MCF 10A (cell line): ENCODE measurements at regions of chr4 and their contacts with region 1.

Region 1: DNA sequence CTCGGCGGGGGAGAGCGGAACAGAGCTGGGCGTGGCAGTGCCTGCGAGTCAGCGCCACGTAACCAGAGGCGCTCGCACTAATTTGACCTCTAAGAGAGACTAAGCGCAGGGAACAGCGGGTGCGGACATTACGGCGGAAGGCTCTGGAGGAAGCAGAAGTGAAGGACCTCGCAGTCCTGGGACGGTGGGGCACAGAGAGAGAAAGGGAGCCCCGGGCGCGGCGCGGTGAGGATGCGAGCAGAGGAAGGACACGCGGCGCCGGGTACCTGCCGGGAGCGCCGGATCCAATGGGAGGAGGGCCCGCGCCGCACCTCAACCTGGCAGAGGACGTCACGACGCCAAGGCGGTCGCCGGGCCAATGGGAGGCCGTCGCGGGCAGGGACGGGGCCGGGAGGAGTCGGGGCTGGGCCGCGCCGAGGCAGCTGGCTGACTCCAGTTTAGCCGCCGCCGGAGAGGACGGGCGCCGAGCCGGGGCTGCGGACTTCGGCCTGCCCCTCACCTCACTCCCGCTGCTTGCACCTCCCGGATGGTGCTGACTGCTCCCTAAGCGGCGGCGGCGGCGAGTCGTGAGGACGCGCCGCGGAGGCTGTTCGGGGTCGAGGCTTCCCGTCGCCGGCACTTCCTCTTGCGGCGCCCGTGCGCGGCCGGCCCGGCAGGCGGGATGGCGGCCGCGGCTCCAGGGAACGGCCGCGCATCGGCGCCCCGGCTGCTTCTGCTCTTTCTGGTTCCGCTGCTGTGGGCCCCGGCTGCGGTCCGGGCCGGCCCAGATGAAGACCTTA is at the start of gene TMEM165:
- DNase-seq: peak; percentile 93
- H3K4me3 Mint-ChIP-seq: peak within 1 kb of the TSS; percentile 93
- H3K27ac Mint-ChIP-seq: peak within 1 kb of the TSS; percentile 98
- H3K4me1 Mint-ChIP-seq: peaks cover 22% of the 10 kb centered on the region
- H3K27me3 Mint-ChIP-seq: no peaks in the 10 kb centered on the region
- CTCF ChIP-seq: no peak
- total RNA-seq, gene TMEM165: 110 and 119 TPM in 2 replicates

Region 2: DNA sequence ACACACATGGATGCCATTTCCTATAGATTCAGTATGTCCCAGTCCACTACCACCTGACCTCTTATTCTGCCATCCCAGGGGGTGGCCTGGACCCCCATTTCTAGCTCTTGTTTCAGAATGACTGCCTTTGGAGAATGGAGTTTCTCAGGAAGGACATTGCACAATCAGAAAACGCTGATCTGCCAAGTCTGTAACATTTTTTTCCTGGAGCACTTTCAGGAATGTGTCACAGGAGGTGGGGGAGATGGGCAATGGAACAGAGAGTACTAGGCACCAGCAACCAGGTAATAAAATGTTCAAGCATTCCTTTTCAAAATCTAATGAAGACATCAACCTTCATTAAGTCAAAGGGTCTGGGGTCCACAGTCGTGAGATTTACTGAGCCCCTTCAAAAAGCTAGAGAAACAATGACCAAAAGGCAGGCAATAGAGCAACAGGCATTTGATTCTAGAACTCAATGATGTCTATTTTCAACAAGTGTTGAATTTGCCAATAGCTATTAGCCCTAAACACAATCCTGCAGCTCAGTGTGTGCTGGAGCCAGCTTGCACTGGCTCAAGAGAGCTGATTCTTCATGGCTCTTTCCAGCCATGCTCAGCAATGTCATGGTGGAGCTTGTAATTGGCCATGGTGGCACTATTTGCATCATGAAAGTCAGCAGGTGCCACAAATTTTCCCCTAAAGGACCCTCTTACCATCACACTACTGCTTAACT is 357.4 kb before region 1 on chr4:
- CTCF ChIA-PET with region 1: no interaction called
- POLR2A ChIA-PET with region 1: interaction called, 18 read pairs
- intact Hi-C with region 1: no loop called
- DNase-seq: peak; percentile 77
- H3K4me3 Mint-ChIP-seq: peak overlapping the region; percentile 59
- H3K27ac Mint-ChIP-seq: peak overlapping the region; percentile 73
- H3K4me1 Mint-ChIP-seq: peaks cover 59% of the 10 kb centered on the region
- H3K27me3 Mint-ChIP-seq: no peaks in the 10 kb centered on the region
- CTCF ChIP-seq: no peak

Region 3: GRCh38 chr4:55258152-55258865 is 137.4 kb before region 1 on chr4:
- CTCF ChIA-PET with region 1: no interaction called
- POLR2A ChIA-PET with region 1: no interaction called
- intact Hi-C with region 1: no loop called
- DNase-seq: no peak
- H3K4me3 Mint-ChIP-seq: no peak overlapping the region
- H3K27ac Mint-ChIP-seq: no peak overlapping the region
- H3K4me1 Mint-ChIP-seq: no peaks in the 10 kb centered on the region
- H3K27me3 Mint-ChIP-seq: no peaks in the 10 kb centered on the region
- CTCF ChIP-seq: no peak

Region 4: GRCh38 chr4:55358668-55359067 is 37.0 kb before region 1 on chr4:
- CTCF ChIA-PET with region 1: interaction called, 6 read pairs
- POLR2A ChIA-PET with region 1: interaction called, 387 read pairs
- intact Hi-C with region 1: loop called (anchors 2 kb)
- DNase-seq: peak; percentile 94
- H3K4me3 Mint-ChIP-seq: no peak overlapping the region
- H3K27ac Mint-ChIP-seq: peak overlapping the region; percentile 76
- H3K4me1 Mint-ChIP-seq: peaks cover 35% of the 10 kb centered on the region
- H3K27me3 Mint-ChIP-seq: no peaks in the 10 kb centered on the region
- CTCF ChIP-seq: no peak

Region 5: DNA sequence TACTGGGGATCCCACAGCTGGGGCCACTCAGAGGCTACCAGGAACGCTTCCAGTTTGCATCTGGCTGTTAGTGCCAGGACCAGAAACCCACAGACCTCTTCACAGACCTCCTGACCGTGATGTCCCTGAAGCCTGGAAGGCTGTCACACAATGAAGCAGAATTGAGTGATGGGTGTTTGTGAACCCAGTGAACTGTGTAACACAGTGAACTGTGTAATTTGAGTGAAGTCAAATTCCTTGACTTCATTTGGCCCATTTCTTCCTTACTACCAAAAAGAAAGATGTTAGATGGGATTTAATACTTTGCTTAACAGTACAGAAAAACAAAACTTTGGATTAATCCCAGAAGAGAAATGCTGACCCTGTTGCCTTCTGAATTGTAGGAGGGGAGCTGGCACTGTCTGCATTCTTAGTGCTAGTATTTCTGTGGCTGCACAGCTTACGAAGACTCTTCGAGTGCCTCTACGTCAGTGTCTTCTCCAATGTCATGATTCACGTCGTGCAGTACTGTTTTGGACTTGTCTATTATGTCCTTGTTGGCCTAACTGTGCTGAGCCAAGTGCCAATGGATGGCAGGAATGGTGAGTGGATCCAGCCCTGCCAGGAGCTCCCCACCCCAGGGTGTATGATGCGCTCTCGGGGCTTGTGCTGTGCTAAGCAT is 31.9 kb before region 1 on chr4:
- CTCF ChIA-PET with region 1: interaction called, 6 read pairs
- POLR2A ChIA-PET with region 1: interaction called, 387 read pairs
- intact Hi-C with region 1: loop called (anchors 2 kb)
- DNase-seq: no peak
- H3K4me3 Mint-ChIP-seq: no peak overlapping the region
- H3K27ac Mint-ChIP-seq: no peak overlapping the region
- H3K4me1 Mint-ChIP-seq: peaks cover 8% of the 10 kb centered on the region
- H3K27me3 Mint-ChIP-seq: no peaks in the 10 kb centered on the region
- CTCF ChIP-seq: no peak

Region 6: GRCh38 chr4:55378617-55379463 is 16.9 kb before region 1 on chr4:
- CTCF ChIA-PET with region 1: interaction called, 3 read pairs
- POLR2A ChIA-PET with region 1: interaction called, 66 read pairs
- intact Hi-C with region 1: loop called (anchors 2 kb)
- DNase-seq: peak; percentile 85
- H3K4me3 Mint-ChIP-seq: peak overlapping the region; percentile 56
- H3K27ac Mint-ChIP-seq: peak overlapping the region; percentile 81
- H3K4me1 Mint-ChIP-seq: peaks cover 8% of the 10 kb centered on the region
- H3K27me3 Mint-ChIP-seq: no peaks in the 10 kb centered on the region
- CTCF ChIP-seq: no peak

Region 7: DNA sequence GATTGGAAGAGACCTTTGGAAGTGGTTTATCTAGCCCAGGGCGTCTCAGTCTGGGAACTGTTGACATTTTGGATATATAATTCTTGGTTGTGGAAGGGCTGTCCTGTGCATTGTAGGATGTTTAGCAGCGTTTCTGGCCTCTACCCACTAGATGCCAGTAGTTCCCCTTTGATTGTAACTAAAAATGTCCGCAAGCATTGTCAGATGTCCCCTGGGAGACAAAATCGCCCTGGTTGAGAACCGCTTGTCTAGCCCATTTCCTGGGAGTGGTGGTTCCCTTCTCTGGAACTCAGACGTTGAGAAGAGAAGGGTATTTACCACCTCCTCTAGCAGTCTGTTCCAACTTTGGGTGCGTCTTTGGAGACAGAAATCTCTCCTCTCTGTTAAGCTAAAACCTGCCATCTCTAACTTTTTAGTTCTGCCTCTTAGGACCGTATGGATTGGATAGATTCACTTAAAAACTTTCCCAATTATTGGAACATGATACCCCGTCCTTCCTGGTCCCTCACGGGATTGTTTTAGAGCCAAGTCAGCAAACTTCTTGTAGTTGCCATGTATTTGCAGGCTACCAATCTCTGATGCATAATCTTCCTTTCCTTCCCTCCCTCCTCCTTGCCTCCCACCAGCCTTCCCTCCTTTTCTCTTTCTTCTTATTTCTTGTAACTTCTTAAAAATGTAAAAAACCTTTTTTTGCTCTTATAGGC is 13.9 kb after region 1 on chr4:
- CTCF ChIA-PET with region 1: interaction called, 6 read pairs
- POLR2A ChIA-PET with region 1: interaction called, 20 read pairs
- intact Hi-C with region 1: no loop called
- DNase-seq: no peak
- H3K4me3 Mint-ChIP-seq: no peak overlapping the region
- H3K27ac Mint-ChIP-seq: peak overlapping the region; percentile 66
- H3K4me1 Mint-ChIP-seq: peaks cover 15% of the 10 kb centered on the region
- H3K27me3 Mint-ChIP-seq: no peaks in the 10 kb centered on the region
- CTCF ChIP-seq: no peak

Region 8: DNA sequence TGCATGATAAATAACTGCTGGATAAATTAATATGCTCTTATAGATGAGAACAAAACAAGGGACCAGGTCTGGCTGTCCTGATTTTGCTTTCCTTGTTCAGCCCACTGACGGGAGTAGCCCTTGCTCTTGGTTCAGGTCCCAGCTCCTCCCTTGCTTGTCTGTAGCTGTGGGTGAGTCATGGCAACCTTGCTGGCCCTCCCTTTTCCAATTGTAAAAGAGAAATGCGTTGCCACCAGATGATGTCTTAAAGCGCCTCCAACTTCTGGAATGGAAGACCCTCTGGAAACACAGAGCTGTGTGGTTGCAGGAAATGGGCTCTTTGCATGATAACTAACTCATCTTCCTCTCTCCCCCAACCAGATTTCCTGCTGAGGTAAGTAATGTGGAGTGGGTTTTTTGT is 820.2 kb after region 1 on chr4:
- CTCF ChIA-PET with region 1: no interaction called
- POLR2A ChIA-PET with region 1: no interaction called
- intact Hi-C with region 1: no loop called
- DNase-seq: peak; percentile 73
- H3K4me3 Mint-ChIP-seq: no peak overlapping the region
- H3K27ac Mint-ChIP-seq: no peak overlapping the region
- H3K4me1 Mint-ChIP-seq: peaks cover 13% of the 10 kb centered on the region
- H3K27me3 Mint-ChIP-seq: no peaks in the 10 kb centered on the region
- CTCF ChIP-seq: no peak